ENCODE measurements at regions of chr4 and their contacts with region 1.

Region 1: DNA sequence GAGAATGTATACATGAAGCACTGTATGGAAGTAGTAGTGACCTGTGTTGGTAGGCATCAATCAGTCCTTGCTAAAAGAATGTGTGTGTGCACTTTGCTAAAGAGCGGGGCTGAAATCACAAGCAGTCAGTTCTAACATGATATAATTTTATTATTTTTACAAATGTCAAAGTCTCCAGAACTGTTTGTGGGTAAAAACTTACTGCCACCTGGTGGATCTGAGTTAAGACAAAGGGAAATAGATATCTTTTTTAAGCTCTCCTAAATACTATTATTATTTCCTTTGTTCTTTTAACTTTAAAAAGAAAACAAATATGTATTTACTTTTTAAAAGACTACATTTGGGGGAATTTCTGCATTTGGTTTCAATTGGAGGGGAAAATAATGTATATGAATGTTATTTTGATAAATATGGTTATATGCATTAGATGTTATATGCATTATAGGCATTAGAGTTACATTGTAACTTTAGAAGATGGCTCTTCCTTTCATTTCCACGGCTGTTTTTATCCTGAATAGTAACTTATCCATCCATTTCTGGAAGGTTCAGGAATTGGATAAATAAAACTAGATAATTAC is 7.8 kb upstream of the CLOCK start:
- DNase-seq: no peak
- ATAC-seq: no peak
- H3K4me3 Mint-ChIP-seq: no peak overlapping the region
- H3K27ac Mint-ChIP-seq: no peak overlapping the region
- H3K4me1 Mint-ChIP-seq: peaks cover 3% of the 10 kb centered on the region
- H3K27me3 Mint-ChIP-seq: peaks cover 11% of the 10 kb centered on the region
- CTCF ChIP-seq: no peak

Region 2: GRCh38 chr4:54971474-54971950 is 583.0 kb before region 1 on chr4:
- CTCF ChIA-PET with region 1: no interaction called
- POLR2A ChIA-PET with region 1: no interaction called
- intact Hi-C with region 1: loop called (anchors 10 kb)
- DNase-seq: no peak
- ATAC-seq: no peak
- H3K4me3 Mint-ChIP-seq: no peak overlapping the region
- H3K27ac Mint-ChIP-seq: no peak overlapping the region
- H3K4me1 Mint-ChIP-seq: no peaks in the 10 kb centered on the region
- H3K27me3 Mint-ChIP-seq: peaks cover 5% of the 10 kb centered on the region
- CTCF ChIP-seq: no peak

Region 3: DNA sequence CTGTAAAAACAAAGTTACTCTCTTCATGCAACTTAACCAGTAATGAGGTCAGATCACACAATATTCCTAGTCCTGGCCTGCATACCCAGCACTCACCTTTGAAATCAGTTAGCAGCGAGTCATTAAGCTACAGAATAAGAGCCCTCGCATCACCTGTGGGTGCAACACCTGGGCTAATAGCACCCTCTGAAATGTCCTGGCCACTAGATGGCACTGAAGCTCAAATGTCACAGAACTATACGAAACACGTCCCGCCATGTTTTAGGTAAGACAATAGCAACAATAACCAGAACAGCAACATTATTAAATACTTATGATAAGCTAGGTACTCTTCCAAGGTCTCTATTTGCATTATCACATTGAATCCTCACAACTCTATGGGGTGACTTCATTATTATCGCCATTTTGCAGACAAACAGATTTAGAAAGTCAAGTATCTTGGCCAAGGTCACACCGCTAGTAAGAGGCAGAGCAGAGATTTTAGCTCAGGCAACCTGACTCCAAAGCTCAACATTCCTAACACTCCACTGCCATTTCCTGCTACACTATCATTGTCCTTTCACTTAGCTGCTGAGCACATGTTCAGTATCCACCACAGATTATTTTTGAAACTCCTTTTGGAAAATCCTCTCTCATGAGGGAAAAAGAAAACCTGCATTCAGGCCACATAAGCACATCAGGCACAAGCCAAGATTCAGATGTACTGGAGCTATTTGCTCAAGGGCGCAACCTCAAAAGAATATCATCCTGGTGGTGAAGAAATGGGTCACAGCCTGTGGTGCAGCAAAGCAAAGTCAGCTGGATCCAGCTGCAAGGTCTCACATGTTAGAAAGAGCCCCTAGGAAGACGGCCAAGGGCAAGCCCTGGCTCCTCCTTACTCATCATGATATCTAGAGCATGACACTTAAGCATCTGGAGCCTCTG is 369.7 kb before region 1 on chr4:
- CTCF ChIA-PET with region 1: no interaction called
- POLR2A ChIA-PET with region 1: no interaction called
- intact Hi-C with region 1: loop called (anchors 10 kb)
- DNase-seq: no peak
- ATAC-seq: no peak
- H3K4me3 Mint-ChIP-seq: no peak overlapping the region
- H3K27ac Mint-ChIP-seq: no peak overlapping the region
- H3K4me1 Mint-ChIP-seq: no peaks in the 10 kb centered on the region
- H3K27me3 Mint-ChIP-seq: peaks cover 6% of the 10 kb centered on the region
- CTCF ChIP-seq: no peak

Region 4: DNA sequence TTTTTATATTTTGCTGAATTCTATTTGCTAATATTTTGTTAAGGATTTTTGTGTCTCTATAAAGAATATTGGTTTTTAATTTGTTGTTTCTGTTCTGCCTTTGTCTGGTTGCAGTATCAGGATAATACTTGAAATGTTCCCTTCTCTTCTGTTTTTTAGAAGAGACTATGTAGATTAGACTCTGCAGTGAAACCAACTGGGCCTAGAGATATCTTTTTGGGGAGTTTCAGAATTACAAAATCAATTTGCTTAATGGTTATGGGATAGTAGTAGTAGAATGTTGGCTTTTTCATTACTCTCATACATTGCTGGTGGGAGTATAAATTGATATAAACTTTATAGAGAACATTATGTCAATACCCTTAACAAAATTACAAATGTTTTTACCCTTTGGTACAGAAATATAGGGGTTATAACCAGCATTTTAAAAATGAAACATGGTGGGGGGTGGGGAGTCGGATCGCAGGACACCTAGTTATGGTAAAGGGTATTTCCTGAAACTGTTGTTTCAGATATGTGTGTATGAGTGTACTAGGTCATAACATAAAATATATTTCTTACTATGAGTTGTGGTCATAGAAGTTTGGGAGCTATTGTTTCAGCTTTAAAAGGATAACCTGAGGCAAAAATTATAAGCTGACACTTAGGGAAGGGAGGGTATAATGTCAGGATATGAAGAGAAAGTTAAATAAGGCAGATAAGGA is 36.9 kb before region 1 on chr4:
- CTCF ChIA-PET with region 1: no interaction called
- POLR2A ChIA-PET with region 1: no interaction called
- intact Hi-C with region 1: no loop called
- DNase-seq: no peak
- ATAC-seq: no peak
- H3K4me3 Mint-ChIP-seq: no peak overlapping the region
- H3K27ac Mint-ChIP-seq: no peak overlapping the region
- H3K4me1 Mint-ChIP-seq: peaks cover 3% of the 10 kb centered on the region
- H3K27me3 Mint-ChIP-seq: no peaks in the 10 kb centered on the region
- CTCF ChIP-seq: no peak